Activated CD8-positive, alpha-beta memory T cell treated with anti-CD3 and anti-CD28 coated beads, Interleukin-2, amount 10 ng/mL, durations not matched to agents 7 days and 5 days (primary cell): ENCODE measurements at regions of chr16 and their contacts with region 1.

Region 1: GRCh38 chr16:84186685-84187437 is at the start of gene TAF1C:
- DNase-seq: peak; percentile 92
- ATAC-seq: peak; percentile 96
- H3K4me3 Mint-ChIP-seq: peak within 1 kb of the TSS; percentile 95
- H3K27ac Mint-ChIP-seq: peak within 1 kb of the TSS; percentile 92
- H3K4me1 Mint-ChIP-seq: peaks cover 13% of the 10 kb centered on the region
- H3K27me3 Mint-ChIP-seq: no peaks in the 10 kb centered on the region
- total RNA-seq, gene TAF1C: 52.7 to 58.1 TPM

Region 2: GRCh38 chr16:83913245-83913633 is 273.6 kb before region 1 on chr16:
- CTCF ChIA-PET with region 1: no interaction called
- DNase-seq: no peak
- ATAC-seq: no peak
- H3K4me3 Mint-ChIP-seq: no peak overlapping the region
- H3K27ac Mint-ChIP-seq: no peak overlapping the region
- H3K4me1 Mint-ChIP-seq: no peaks in the 10 kb centered on the region
- H3K27me3 Mint-ChIP-seq: no peaks in the 10 kb centered on the region

Region 3: DNA sequence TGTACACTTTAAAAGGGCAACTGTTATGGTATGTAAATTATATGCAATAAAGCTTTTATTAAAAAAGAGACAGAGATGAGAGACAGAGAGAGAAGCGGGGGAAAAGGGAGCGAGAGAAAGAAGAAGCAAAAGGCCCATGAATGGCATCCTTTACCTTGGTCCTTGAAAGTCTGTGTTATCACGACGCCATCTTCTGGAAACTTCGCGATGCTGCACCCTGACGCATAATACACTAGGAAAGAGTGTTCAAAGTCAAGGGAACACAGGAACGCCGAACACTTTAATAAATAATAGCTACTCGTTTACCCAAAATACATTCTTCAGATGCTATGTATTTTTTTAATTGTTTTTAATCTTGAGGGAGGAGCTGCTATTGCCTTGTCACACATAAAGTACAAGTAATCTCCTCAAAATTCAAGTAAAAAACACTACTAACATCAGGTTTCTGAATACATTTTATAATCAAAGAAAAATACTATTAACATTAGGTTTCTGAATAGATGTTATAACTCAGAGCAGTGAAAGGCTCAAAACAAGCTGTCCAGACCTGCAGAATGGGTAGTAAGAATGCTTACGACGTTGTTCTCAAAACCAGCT is 121.2 kb before region 1 on chr16:
- CTCF ChIA-PET with region 1: interaction called, 14 read pairs
- DNase-seq: peak; percentile 58
- ATAC-seq: peak; percentile 42
- H3K4me3 Mint-ChIP-seq: no peak overlapping the region
- H3K27ac Mint-ChIP-seq: no peak overlapping the region
- H3K4me1 Mint-ChIP-seq: peaks cover 7% of the 10 kb centered on the region
- H3K27me3 Mint-ChIP-seq: no peaks in the 10 kb centered on the region

Region 4: GRCh38 chr16:84084570-84085270 is 102.1 kb before region 1 on chr16:
- CTCF ChIA-PET with region 1: interaction called, 143 read pairs
- DNase-seq: peak; percentile 85
- ATAC-seq: peak; percentile 87
- H3K4me3 Mint-ChIP-seq: no peak overlapping the region
- H3K27ac Mint-ChIP-seq: peak overlapping the region; percentile 25
- H3K4me1 Mint-ChIP-seq: peaks cover 50% of the 10 kb centered on the region
- H3K27me3 Mint-ChIP-seq: no peaks in the 10 kb centered on the region

Region 5: DNA sequence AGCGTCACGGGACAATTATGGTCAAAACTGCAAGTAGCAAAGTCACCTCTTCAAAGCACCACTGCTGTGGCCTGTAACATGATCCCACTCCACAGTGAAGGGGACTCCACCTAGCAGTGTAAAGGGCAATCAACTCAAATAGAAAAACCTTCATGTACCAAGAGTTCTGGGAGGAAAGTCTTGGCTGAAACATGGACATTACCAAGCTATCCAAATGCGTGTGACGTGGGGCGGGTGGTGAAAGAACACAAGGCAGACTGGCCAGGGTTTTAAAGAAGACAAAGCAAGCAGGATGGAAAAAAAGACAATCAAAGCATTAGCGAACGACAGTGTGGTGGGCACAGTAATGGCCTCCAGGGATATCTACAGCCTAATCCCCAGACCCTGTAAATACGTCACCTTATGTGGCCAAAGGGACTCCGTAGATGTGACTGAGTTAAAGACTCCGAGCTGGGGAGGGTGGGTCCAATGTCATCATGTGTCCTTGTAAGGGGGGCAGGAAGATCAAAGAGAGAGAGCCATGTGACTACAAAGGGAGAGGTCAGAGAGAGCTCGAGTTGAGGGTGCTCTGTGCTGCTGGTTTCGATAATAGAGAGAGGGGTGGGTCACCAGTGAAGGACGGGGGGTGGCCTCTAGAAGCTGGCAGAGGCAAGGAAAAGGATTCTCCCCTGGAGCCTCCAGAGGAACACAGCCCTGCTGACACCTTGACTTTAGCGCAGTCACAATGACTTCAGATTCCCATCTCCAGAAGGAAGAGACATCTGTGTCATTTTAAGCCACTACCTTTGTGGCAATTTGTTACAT is 47.8 kb before region 1 on chr16:
- CTCF ChIA-PET with region 1: interaction called, 14 read pairs
- DNase-seq: peak; percentile 72
- ATAC-seq: peak; percentile 91
- H3K4me3 Mint-ChIP-seq: peak overlapping the region; percentile 11
- H3K27ac Mint-ChIP-seq: peak overlapping the region; percentile 76
- H3K4me1 Mint-ChIP-seq: peaks cover 28% of the 10 kb centered on the region
- H3K27me3 Mint-ChIP-seq: no peaks in the 10 kb centered on the region

Region 6: GRCh38 chr16:84166796-84167695 is 19.8 kb before region 1 on chr16:
- CTCF ChIA-PET with region 1: interaction called, 10 read pairs
- DNase-seq: peak; percentile 70
- ATAC-seq: peak; percentile 45
- H3K4me3 Mint-ChIP-seq: no peak overlapping the region
- H3K27ac Mint-ChIP-seq: no peak overlapping the region
- H3K4me1 Mint-ChIP-seq: peaks cover 8% of the 10 kb centered on the region
- H3K27me3 Mint-ChIP-seq: peaks cover 46% of the 10 kb centered on the region